Right lobe of liver (tissue), 6 donors: ENCODE measurements at regions of chr11 and their contacts with region 1.

Region 1: DNA sequence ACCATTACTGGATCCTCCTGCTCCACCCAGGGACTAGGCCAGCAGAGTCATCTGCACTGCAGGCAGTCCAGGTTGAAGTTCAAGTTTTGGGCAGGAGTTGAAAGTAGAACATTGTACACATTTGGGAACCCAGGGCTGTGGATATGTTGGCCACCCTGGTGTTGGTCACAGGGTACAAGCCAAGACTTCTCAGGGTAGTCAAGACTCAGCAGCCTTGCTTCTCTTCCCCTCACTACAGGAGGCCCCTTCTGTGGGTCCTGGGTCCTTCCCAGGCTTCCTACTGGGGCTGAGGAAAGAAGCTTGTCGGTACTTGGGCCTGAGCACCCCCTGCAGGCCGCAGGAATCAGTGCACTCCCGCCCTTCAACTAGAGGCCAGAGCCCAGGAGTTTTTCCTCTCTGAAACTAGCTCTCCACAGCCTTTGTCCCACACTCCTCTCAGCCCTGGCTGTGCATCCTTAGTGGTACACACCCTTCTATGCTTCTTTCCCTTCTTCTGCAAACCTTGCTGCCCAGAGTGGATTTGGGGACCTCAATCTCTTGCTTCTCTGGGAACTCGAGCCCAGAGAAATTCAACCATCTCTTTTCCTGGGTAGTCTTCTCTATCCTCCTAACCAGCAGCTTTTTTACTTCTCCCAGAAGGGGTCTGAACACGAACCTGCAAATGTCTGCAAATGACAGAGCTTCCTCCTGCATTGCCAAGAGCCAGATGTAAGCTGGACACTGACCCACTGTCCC is 2.6 kb upstream of the HPX start:
- DNase-seq: peak in 2 of 3 donors; percentile 72 to 74
- ATAC-seq: peak; percentile 53 to 69 (median 61)
- H3K4me3 ChIP-seq: peak overlapping the region in 1 of 3 donors; percentile 79
- H3K27ac ChIP-seq: peak overlapping the region; percentile 33 to 88 (median 87)
- H3K4me1 ChIP-seq: peaks cover 0 to 31% (median 9%) of the 10 kb centered on the region in 4 donors
- H3K27me3 ChIP-seq: no peaks in the 10 kb centered on the region
- CTCF ChIP-seq: peak; percentile 80 to 90 (median 86)
- POLR2A ChIP-seq: no peak

Region 2: GRCh38 chr11:6269994-6270393 is 173.4 kb before region 1 on chr11:
- intact Hi-C with region 1: no loop called
- DNase-seq: no peak
- ATAC-seq: peak in 1 of 4 donors; percentile 35
- H3K4me3 ChIP-seq: no peak overlapping the region
- H3K27ac ChIP-seq: no peak overlapping the region
- H3K4me1 ChIP-seq: no peaks in the 10 kb centered on the region
- H3K27me3 ChIP-seq: no peaks in the 10 kb centered on the region
- CTCF ChIP-seq: no peak
- POLR2A ChIP-seq: no peak

Region 3: DNA sequence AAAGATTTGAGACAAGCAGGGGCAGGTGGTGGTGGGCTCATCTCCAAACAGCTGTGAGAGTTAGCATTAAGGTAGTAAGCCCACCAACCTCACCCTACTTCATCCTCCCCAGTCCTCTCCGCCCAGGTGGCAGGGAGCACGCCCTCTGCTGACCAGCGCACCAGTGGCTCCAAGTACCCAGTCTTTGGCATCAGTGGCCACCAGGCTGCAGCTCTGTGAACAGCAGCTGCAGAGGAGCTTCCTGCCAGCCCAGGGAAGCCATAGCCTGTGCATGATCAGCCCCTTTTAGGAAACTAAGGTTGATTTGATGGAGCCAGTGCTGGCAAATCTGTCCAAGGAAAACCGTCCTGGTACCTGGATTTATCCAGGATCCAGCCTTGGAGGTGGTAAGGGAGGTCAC is 144.8 kb before region 1 on chr11:
- intact Hi-C with region 1: no loop called
- DNase-seq: peak; percentile 60 to 68 (median 63)
- ATAC-seq: peak; percentile 77 to 99 (median 88)
- H3K4me3 ChIP-seq: no peak overlapping the region
- H3K27ac ChIP-seq: no peak overlapping the region
- H3K4me1 ChIP-seq: no peaks in the 10 kb centered on the region
- H3K27me3 ChIP-seq: no peaks in the 10 kb centered on the region
- CTCF ChIP-seq: peak; percentile 52 to 71 (median 64)
- POLR2A ChIP-seq: no peak

Region 4: GRCh38 chr11:6377902-6378639 is 65.4 kb before region 1 on chr11:
- intact Hi-C with region 1: loop called in 1 of 2 experiments (anchors 10 kb)
- DNase-seq: no peak
- ATAC-seq: peak; percentile 45 to 68 (median 54)
- H3K4me3 ChIP-seq: no peak overlapping the region
- H3K27ac ChIP-seq: no peak overlapping the region
- H3K4me1 ChIP-seq: no peaks in the 10 kb centered on the region
- H3K27me3 ChIP-seq: no peaks in the 10 kb centered on the region
- CTCF ChIP-seq: no peak
- POLR2A ChIP-seq: no peak

Region 5: GRCh38 chr11:6389921-6390724 is 53.3 kb before region 1 on chr11 and contains the start of gene SMPD1:
- intact Hi-C with region 1: loop called in 1 of 2 experiments (anchors 5 kb)
- DNase-seq: peak; percentile 96 to 97 (median 96)
- ATAC-seq: peak; percentile 94 to 98 (median 95)
- H3K4me3 ChIP-seq: peak within 1 kb of the TSS; percentile 79 to 96 (median 95)
- H3K27ac ChIP-seq: peak within 1 kb of the TSS; percentile 81 to 87 (median 85)
- H3K4me1 ChIP-seq: peaks cover 0 to 31% (median 12%) of the 10 kb centered on the region in 4 donors
- H3K27me3 ChIP-seq: no peaks in the 10 kb centered on the region
- CTCF ChIP-seq: no peak
- POLR2A ChIP-seq: peak; percentile 86
- total RNA-seq, gene SMPD1: 45.3 to 77.9 (median 57.3) TPM

Region 6: DNA sequence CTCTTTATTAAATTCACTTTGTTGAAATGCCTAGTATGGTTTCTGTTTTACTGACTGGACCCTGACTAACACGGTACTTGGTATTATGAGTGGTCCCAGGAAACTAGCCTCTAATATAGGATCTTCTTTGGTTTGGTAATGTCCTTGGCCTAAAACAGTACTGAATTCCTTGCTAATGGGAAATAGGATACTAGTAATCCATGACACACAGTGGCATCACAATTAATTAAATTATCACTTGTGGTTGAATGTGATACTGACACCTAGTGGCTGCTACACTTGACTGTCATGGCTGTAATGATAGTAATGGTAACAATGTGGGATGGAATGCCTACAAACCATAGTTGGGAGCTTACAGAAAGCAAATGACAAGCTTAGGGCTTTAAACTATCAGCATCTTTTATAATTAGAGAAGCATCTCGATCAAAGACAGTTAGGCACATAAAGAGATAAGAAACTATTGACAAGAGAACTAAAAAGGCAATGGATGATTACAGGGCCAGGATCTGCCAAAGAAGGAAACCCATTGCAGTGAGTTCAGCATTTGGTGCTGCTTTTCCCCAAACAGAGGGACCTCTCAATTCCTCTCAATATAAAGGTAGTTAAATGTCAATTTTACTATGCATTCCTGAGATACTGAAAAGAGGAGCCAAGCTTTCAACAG is 62.3 kb after region 1 on chr11:
- intact Hi-C with region 1: no loop called
- DNase-seq: no peak
- ATAC-seq: peak; percentile 84 to 86 (median 84)
- H3K4me3 ChIP-seq: no peak overlapping the region
- H3K27ac ChIP-seq: no peak overlapping the region
- H3K4me1 ChIP-seq: peaks cover 0 to 11% (median 0%) of the 10 kb centered on the region in 4 donors
- H3K27me3 ChIP-seq: no peaks in the 10 kb centered on the region
- CTCF ChIP-seq: peak; percentile 77 to 87 (median 82)
- POLR2A ChIP-seq: no peak

Region 7: GRCh38 chr11:6627762-6628241 is 184.4 kb after region 1 on chr11:
- intact Hi-C with region 1: no loop called
- DNase-seq: no peak
- ATAC-seq: no peak
- H3K4me3 ChIP-seq: no peak overlapping the region
- H3K27ac ChIP-seq: no peak overlapping the region
- H3K4me1 ChIP-seq: no peaks in the 10 kb centered on the region
- H3K27me3 ChIP-seq: no peaks in the 10 kb centered on the region
- CTCF ChIP-seq: no peak
- POLR2A ChIP-seq: no peak